ENCODE measurements at regions of chr6 and their contacts with region 1.

Region 1: GRCh38 chr6:16183187-16183664 is 54.3 kb downstream of the MYLIP start:
- DNase-seq: no peak
- ATAC-seq: no peak
- H3K4me3 Mint-ChIP-seq: no peak overlapping the region
- H3K27ac Mint-ChIP-seq: no peak overlapping the region
- H3K4me1 Mint-ChIP-seq: peaks cover 35% of the 10 kb centered on the region
- H3K27me3 Mint-ChIP-seq: peaks cover 8% of the 10 kb centered on the region

Region 2: DNA sequence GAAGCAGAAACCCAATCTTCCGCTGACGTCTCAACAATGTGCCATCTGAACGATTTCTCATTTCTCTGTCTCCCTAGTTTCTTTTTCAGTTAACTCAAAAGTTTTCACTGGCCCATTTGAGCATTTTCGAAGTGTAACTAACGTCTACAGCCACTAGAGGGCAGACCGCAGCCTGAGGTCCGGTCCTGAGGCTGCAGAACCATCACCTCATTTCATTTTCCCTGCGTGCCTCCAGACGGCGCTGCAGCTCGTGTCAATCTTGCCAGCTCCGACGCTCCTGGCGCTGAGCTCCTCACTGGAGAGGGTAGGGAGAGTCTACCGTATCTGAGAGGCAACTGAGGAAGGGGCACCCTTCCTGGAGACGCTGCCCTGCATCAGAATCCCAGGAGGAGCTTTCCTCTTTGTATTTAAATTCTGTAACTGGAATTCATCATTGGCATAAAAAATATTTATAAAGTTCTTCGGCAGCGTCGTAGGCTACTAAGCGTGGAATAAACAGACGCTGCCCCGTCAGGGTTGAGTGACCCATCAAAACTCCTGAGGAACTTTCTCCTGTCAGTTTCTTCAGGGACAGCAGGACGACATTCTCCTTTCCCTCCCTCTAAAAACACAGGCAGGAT is 491.9 kb before region 1 on chr6:
- CTCF ChIA-PET with region 1: interaction called, 67 read pairs
- DNase-seq: peak; percentile 87
- ATAC-seq: peak; percentile 98
- H3K4me3 Mint-ChIP-seq: peak overlapping the region; percentile 17
- H3K27ac Mint-ChIP-seq: peak overlapping the region; percentile 37
- H3K4me1 Mint-ChIP-seq: peaks cover 9% of the 10 kb centered on the region
- H3K27me3 Mint-ChIP-seq: peaks cover 6% of the 10 kb centered on the region

Region 3: DNA sequence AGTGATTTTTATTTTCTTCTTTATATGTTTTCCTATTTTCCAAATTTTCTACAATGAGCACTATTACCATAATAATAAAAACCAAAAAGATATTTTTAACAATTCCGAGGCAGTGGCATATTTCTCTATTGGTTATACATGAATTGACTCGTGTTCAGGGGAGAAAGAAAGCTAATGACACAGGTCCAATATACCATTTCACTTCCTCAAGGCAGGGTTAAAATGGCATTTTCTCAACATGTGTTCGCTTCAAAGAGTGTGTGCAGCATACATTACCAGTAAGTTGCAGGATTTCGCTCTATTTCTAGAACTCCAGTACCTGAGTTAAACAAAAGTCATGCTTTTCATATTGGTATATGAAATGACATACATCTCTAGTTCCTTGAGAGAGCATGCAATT is 485.3 kb before region 1 on chr6:
- CTCF ChIA-PET with region 1: interaction called, 67 read pairs
- DNase-seq: no peak
- ATAC-seq: no peak
- H3K4me3 Mint-ChIP-seq: no peak overlapping the region
- H3K27ac Mint-ChIP-seq: no peak overlapping the region
- H3K4me1 Mint-ChIP-seq: no peaks in the 10 kb centered on the region
- H3K27me3 Mint-ChIP-seq: peaks cover 23% of the 10 kb centered on the region

Region 4: DNA sequence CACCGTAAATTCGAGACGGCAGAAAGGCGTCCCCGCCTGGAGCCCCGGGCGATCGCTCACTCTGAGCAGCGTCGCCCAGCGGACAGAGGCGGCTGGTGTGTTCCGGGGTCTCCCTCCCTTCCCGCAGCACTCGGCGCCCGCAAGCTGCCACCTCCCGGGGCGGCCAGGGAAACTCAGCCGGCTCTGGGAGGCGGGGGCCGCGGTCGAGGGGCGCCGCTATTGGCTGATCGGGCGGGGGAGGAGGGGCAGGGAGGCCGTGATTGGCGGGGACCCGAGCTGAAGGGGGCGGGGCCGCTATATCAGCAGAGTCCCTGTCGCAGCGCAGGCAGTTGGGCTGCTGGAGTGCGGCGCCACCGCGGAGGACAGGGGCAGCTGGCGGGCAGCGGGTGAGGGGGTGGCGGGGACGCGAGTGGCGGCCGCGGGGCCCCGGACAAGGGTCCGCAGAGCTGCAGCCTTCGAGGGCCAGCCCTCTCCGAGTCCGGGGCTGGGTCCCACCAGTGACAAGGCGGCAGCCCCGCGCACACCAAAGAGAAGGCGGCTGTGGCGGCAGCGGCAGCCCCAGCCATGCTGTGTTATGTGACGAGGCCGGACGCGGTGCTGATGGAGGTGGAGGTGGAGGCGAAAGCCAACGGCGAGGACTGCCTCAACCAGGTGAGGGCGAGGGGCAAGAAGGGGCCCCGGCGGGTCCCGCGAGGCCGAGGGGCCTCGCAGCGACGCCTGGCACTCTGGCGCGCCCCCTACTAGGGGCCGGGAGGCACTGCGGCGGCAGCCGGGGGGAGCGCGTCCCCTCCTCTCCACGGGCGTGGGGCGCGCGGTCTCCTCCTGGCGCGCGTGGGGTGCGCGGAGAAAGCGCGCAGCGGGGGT is 54.2 kb before region 1 on chr6 and contains the start of gene MYLIP:
- CTCF ChIA-PET with region 1: interaction called, 45 read pairs
- DNase-seq: peak; percentile 97
- ATAC-seq: peak; percentile 82
- H3K4me3 Mint-ChIP-seq: peak within 1 kb of the TSS; percentile 91
- H3K27ac Mint-ChIP-seq: peak within 1 kb of the TSS; percentile 89
- H3K4me1 Mint-ChIP-seq: peaks cover 33% of the 10 kb centered on the region
- H3K27me3 Mint-ChIP-seq: peaks cover 21% of the 10 kb centered on the region
- total RNA-seq, gene MYLIP: 9.1 to 14.8 TPM

Region 5: GRCh38 chr6:16136621-16137450 is 46.4 kb before region 1 on chr6:
- CTCF ChIA-PET with region 1: interaction called, 45 read pairs
- DNase-seq: peak; percentile 72
- ATAC-seq: peak; percentile 83
- H3K4me3 Mint-ChIP-seq: peak overlapping the region; percentile 55
- H3K27ac Mint-ChIP-seq: peak overlapping the region; percentile 87
- H3K4me1 Mint-ChIP-seq: peaks cover 62% of the 10 kb centered on the region
- H3K27me3 Mint-ChIP-seq: no peaks in the 10 kb centered on the region

Region 6: GRCh38 chr6:16168858-16169257 is 14.4 kb before region 1 on chr6:
- CTCF ChIA-PET with region 1: interaction called, 13 read pairs
- DNase-seq: no peak
- ATAC-seq: peak; percentile 49
- H3K4me3 Mint-ChIP-seq: no peak overlapping the region
- H3K27ac Mint-ChIP-seq: no peak overlapping the region
- H3K4me1 Mint-ChIP-seq: peaks cover 20% of the 10 kb centered on the region
- H3K27me3 Mint-ChIP-seq: peaks cover 34% of the 10 kb centered on the region

Region 7: DNA sequence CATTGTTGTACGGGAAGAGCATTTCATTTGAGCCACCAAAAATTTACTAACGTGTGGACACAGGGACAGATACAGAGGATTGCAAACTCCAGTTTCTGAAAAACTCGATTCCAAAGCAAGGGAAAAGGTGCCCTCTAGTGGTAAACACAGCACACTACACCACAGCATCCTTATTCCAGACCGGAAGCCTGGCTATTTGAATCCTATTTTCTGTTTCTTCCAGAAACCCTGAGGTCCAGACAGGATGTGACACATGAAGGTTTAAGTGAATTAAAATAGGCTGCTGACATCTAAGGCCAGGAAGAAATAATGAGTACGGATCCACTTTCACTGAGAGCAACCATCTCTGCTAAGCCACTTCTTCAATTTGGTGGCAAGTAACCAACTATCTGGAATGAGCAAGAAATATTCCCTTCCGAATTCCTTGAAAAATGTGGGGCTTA is 23.4 kb after region 1 on chr6:
- CTCF ChIA-PET with region 1: interaction called, 14 read pairs
- DNase-seq: peak; percentile 55
- ATAC-seq: peak; percentile 39
- H3K4me3 Mint-ChIP-seq: no peak overlapping the region
- H3K27ac Mint-ChIP-seq: no peak overlapping the region
- H3K4me1 Mint-ChIP-seq: peaks cover 9% of the 10 kb centered on the region
- H3K27me3 Mint-ChIP-seq: peaks cover 32% of the 10 kb centered on the region